GM23248 (cell line): ENCODE measurements at regions of chr19 and their contacts with region 1.

Region 1: DNA sequence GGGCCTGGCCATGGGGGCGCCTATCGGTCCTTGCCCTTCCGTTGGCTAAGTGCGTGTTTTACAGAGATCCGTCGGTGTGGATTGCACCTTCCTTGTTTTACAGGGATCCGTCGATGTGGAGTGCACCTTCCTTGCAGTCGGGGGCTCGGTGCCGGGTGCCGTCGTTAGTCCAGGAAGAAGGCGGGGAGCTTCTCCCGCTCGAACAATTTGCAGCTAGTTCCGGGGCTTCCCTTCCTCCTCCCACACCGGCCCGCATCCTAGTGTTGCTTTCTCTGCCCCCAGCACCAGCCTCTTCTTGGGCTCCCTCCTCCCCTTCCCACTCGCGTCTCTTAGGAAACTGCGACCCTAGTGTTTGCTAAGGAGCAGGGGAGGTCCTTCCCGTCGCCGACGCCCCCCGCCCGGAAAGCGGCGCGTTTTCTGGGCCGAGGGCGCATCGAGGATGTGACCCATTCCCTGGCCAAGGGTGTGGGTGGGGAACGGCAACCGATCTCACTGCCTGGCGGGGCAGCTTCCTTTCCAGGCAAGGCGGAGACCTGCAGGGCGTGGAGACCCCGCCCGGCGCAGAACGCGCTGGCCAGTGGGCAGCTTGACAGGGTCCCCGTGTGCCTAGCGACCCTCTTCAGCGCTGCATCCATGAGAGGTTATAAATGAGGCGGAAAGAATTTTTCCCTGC is 75.7 kb upstream of the ZNF91 start:
- DNase-seq: no peak
- H3K4me3 ChIP-seq: no peak overlapping the region
- H3K27ac ChIP-seq: no peak overlapping the region
- H3K4me1 ChIP-seq: no peaks in the 10 kb centered on the region
- H3K27me3 ChIP-seq: no peaks in the 10 kb centered on the region

Region 2: GRCh38 chr19:23971598-23971997 is 500.6 kb after region 1 on chr19:
- in situ Hi-C with region 1: loop called (anchors 5 kb)
- DNase-seq: no peak
- H3K4me3 ChIP-seq: no peak overlapping the region
- H3K27ac ChIP-seq: no peak overlapping the region
- H3K4me1 ChIP-seq: no peaks in the 10 kb centered on the region
- H3K27me3 ChIP-seq: no peaks in the 10 kb centered on the region